Right ventricle myocardium superior (tissue), 1 donor: ENCODE measurements at regions of chr16 and their contacts with region 1.

Region 1: GRCh38 chr16:88856828-88857733 is at the starts of genes GALNS and TRAPPC2L:
- DNase-seq: peak; percentile 100
- ATAC-seq: peak; percentile 97
- total RNA-seq, gene GALNS: 15.9 TPM
- total RNA-seq, gene TRAPPC2L: 53.0 TPM

Region 2: GRCh38 chr16:88523309-88524161 is 333.5 kb before region 1 on chr16:
- intact Hi-C with region 1: no loop called
- DNase-seq: no peak
- ATAC-seq: no peak

Region 3: GRCh38 chr16:88811769-88812512 is 45.1 kb before region 1 on chr16 and contains the start of gene APRT:
- intact Hi-C with region 1: loop called (anchors 5 kb)
- DNase-seq: peak; percentile 95
- ATAC-seq: peak; percentile 96
- total RNA-seq, gene APRT: 40.4 TPM